ENCODE measurements at regions of chr22 and their contacts with region 1.

Region 1: GRCh38 chr22:37849089-37849751 is at the start of gene EIF3L:
- DNase-seq: peak; percentile 79 to 90 (median 84)
- ATAC-seq: peak; percentile 79
- H3K4me3 ChIP-seq: peak within 1 kb of the TSS; percentile 77
- H3K4me3 Mint-ChIP-seq: peak within 1 kb of the TSS; percentile 91 to 99 (median 95)
- H3K27ac ChIP-seq: peak within 1 kb of the TSS; percentile 79
- H3K27ac Mint-ChIP-seq: peak within 1 kb of the TSS; percentile 89 to 100 (median 98)
- H3K4me1 ChIP-seq: peaks cover 21 to 26% of the 10 kb centered on the region in 2 donors
- H3K4me1 Mint-ChIP-seq: peaks cover 26 to 60% (median 50%) of the 10 kb centered on the region in 7 donors
- H3K27me3 ChIP-seq: no peaks in the 10 kb centered on the region
- H3K27me3 Mint-ChIP-seq: no peaks in the 10 kb centered on the region
- total RNA-seq, gene EIF3L: 383 to 586 (median 525) TPM

Region 2: GRCh38 chr22:37229805-37230672 is 619.2 kb before region 1 on chr22:
- CTCF ChIA-PET with region 1: no interaction called
- POLR2A ChIA-PET with region 1: no interaction called
- intact Hi-C with region 1: loop called in 1 of 2 experiments (anchors 1 kb)
- DNase-seq: peak; percentile 60 to 93 (median 89)
- ATAC-seq: peak; percentile 93
- H3K4me3 ChIP-seq: peak overlapping the region; percentile 54
- H3K4me3 Mint-ChIP-seq: peak overlapping the region; percentile 75 to 99 (median 86)
- H3K27ac ChIP-seq: peak overlapping the region; percentile 90
- H3K27ac Mint-ChIP-seq: peak overlapping the region; percentile 96 to 100 (median 99)
- H3K4me1 ChIP-seq: peaks cover 80 to 92% of the 10 kb centered on the region in 2 donors
- H3K4me1 Mint-ChIP-seq: peaks cover 75 to 92% (median 87%) of the 10 kb centered on the region in 7 donors
- H3K27me3 ChIP-seq: no peaks in the 10 kb centered on the region
- H3K27me3 Mint-ChIP-seq: no peaks in the 10 kb centered on the region

Region 3: DNA sequence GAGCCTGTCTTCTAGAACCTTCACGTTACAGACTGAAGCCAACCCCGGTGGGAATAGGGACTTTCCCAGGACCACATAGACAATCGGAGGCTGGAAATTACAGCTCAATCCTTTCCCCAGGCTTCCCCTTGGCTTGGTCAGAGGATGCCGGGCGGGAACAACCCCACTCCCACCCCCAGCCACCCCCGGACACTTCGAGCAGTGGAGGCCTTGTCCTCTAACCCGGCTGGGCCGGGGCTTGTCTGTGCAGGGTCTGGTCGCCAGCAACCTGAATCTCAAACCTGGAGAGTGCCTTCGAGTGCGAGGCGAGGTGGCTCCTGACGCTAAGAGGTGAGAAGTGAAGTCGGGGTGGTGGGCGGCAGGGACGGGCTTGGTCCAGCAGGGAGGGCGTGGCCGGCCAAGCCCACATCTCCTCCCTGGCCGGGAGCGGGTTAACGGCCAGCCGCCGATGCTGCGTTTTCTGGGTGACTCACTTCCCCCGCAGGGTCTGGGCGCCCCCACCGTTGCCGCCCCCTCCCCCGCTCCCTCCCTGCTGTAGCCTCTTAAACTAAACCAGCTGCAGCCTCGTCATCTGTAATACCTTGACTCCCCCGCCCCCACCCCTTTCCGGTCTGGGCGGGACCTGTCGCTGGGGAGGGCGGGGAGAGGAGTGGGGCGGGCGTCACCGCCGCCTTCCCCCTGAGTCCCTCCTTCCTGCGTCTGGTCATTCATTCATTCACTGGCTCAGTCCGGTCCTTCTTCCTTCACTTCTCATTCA is 172.3 kb before region 1 on chr22:
- CTCF ChIA-PET with region 1: no interaction called
- POLR2A ChIA-PET with region 1: no interaction called
- intact Hi-C with region 1: loop called in 1 of 2 experiments (anchors 5 kb)
- DNase-seq: peak; percentile 82 to 95 (median 94)
- ATAC-seq: peak; percentile 93
- H3K4me3 ChIP-seq: peak overlapping the region; percentile 60
- H3K4me3 Mint-ChIP-seq: peak overlapping the region; percentile 82 to 99 (median 91)
- H3K27ac ChIP-seq: peak overlapping the region; percentile 99
- H3K27ac Mint-ChIP-seq: peak overlapping the region; percentile 94 to 100 (median 100)
- H3K4me1 ChIP-seq: peaks cover 29 to 37% of the 10 kb centered on the region in 2 donors
- H3K4me1 Mint-ChIP-seq: peaks cover 14 to 68% (median 60%) of the 10 kb centered on the region in 7 donors
- H3K27me3 ChIP-seq: no peaks in the 10 kb centered on the region
- H3K27me3 Mint-ChIP-seq: no peaks in the 10 kb centered on the region

Region 4: GRCh38 chr22:37734964-37735451 is 114.2 kb before region 1 on chr22:
- CTCF ChIA-PET with region 1: no interaction called
- POLR2A ChIA-PET with region 1: no interaction called
- intact Hi-C with region 1: no loop called
- DNase-seq: no peak
- ATAC-seq: no peak
- H3K4me3 ChIP-seq: no peak overlapping the region
- H3K4me3 Mint-ChIP-seq: no peak overlapping the region
- H3K27ac ChIP-seq: no peak overlapping the region
- H3K27ac Mint-ChIP-seq: no peak overlapping the region
- H3K4me1 ChIP-seq: no peaks in the 10 kb centered on the region
- H3K4me1 Mint-ChIP-seq: peaks cover 0 to 6% (median 0%) of the 10 kb centered on the region in 7 donors
- H3K27me3 ChIP-seq: no peaks in the 10 kb centered on the region
- H3K27me3 Mint-ChIP-seq: no peaks in the 10 kb centered on the region

Region 5: DNA sequence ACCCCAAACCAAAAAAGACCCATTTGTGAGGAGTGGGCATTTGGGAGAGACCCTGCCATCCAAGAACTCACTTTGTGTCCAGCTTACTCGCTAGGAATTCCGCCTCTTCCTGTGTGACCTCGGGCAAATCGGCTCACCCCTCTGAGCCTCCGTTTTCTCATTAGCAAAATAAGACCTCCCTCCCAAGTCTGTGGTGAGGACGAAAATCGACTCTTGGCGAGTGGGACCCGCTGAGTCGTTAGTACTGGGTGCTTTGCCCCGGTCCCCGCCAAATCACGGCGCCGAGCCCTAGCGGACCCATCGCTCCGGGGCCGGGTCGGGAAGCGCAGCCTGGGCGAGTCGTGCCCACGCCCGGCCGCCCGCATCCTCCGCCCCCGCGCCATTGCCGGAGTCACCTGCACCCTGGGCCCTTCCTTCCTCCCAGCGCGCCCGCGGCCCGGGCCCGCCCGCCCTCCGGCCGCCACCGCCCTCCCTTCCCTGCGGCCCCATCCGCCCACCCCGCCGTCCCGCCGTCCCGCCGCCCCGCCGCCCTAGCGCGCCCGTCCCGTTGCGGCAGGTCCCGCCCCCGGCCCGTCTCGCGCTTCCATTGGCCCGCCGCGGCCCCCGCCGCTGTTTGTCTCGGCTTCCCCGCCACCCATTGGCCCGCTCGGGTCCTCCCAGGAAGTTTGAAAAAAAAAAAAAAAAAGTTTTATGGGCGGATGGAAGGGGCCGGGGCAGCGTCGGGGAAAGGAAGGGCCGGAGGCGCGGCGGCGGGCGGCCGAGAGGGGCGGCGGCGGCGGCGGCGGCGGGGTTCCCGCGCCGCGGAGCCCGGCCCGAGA is 103.5 kb before region 1 on chr22:
- CTCF ChIA-PET with region 1: no interaction called
- POLR2A ChIA-PET with region 1: no interaction called
- intact Hi-C with region 1: loop called in 1 of 2 experiments (anchors 1 kb)
- DNase-seq: peak; percentile 67 to 90 (median 78)
- ATAC-seq: peak; percentile 97
- H3K4me3 ChIP-seq: peak overlapping the region; percentile 74
- H3K4me3 Mint-ChIP-seq: peak overlapping the region; percentile 82 to 96 (median 92)
- H3K27ac ChIP-seq: peak overlapping the region; percentile 77
- H3K27ac Mint-ChIP-seq: peak overlapping the region; percentile 75 to 93 (median 87)
- H3K4me1 ChIP-seq: peaks cover 9 to 18% of the 10 kb centered on the region in 2 donors
- H3K4me1 Mint-ChIP-seq: peaks cover 13 to 36% (median 26%) of the 10 kb centered on the region in 7 donors
- H3K27me3 ChIP-seq: no peaks in the 10 kb centered on the region
- H3K27me3 Mint-ChIP-seq: no peaks in the 10 kb centered on the region

Region 6: GRCh38 chr22:37817705-37818408 is 31.4 kb before region 1 on chr22:
- CTCF ChIA-PET with region 1: interaction called, 3 read pairs
- POLR2A ChIA-PET with region 1: interaction called, 4 read pairs
- intact Hi-C with region 1: loop called in 1 of 2 experiments (anchors 1 kb)
- DNase-seq: peak; percentile 44 to 92 (median 72)
- ATAC-seq: peak; percentile 92
- H3K4me3 ChIP-seq: peak overlapping the region; percentile 61
- H3K4me3 Mint-ChIP-seq: peak overlapping the region in 9 of 10 donors; percentile 34 to 74 (median 52)
- H3K27ac ChIP-seq: no peak overlapping the region
- H3K27ac Mint-ChIP-seq: no peak overlapping the region
- H3K4me1 ChIP-seq: peaks cover 10% of the 10 kb centered on the region in 2 donors
- H3K4me1 Mint-ChIP-seq: peaks cover 0 to 16% (median 11%) of the 10 kb centered on the region in 7 donors
- H3K27me3 ChIP-seq: no peaks in the 10 kb centered on the region
- H3K27me3 Mint-ChIP-seq: peaks cover 9 to 33% (median 20%) of the 10 kb centered on the region in 5 donors

Region 7: GRCh38 chr22:37905534-37906363 is 56.5 kb after region 1 on chr22 and contains the start of gene MICALL1:
- CTCF ChIA-PET with region 1: interaction called, 3 read pairs
- POLR2A ChIA-PET with region 1: interaction called, 4 read pairs
- intact Hi-C with region 1: loop called in 1 of 2 experiments (anchors 1 kb)
- DNase-seq: peak; percentile 39 to 82 (median 57)
- ATAC-seq: peak; percentile 90
- H3K4me3 ChIP-seq: peak within 1 kb of the TSS; percentile 47
- H3K4me3 Mint-ChIP-seq: peak within 1 kb of the TSS; percentile 69 to 92 (median 86)
- H3K27ac ChIP-seq: peak within 1 kb of the TSS; percentile 72
- H3K27ac Mint-ChIP-seq: peak within 1 kb of the TSS; percentile 79 to 90 (median 86)
- H3K4me1 ChIP-seq: peaks cover 0 to 9% of the 10 kb centered on the region in 2 donors
- H3K4me1 Mint-ChIP-seq: peaks cover 21 to 34% (median 26%) of the 10 kb centered on the region in 7 donors
- H3K27me3 ChIP-seq: no peaks in the 10 kb centered on the region
- H3K27me3 Mint-ChIP-seq: no peaks in the 10 kb centered on the region
- total RNA-seq, gene MICALL1: 22.2 to 40.0 (median 27.8) TPM

Region 8: GRCh38 chr22:38181453-38182247 is 332.4 kb after region 1 on chr22 and contains the start of gene PLA2G6:
- CTCF ChIA-PET with region 1: no interaction called
- POLR2A ChIA-PET with region 1: no interaction called
- intact Hi-C with region 1: loop called (anchors 5 kb)
- DNase-seq: peak; percentile 86 to 99 (median 90)
- ATAC-seq: peak; percentile 96
- H3K4me3 ChIP-seq: peak within 1 kb of the TSS; percentile 90
- H3K4me3 Mint-ChIP-seq: peak within 1 kb of the TSS; percentile 88 to 100 (median 94)
- H3K27ac ChIP-seq: peak within 1 kb of the TSS; percentile 67
- H3K27ac Mint-ChIP-seq: peak within 1 kb of the TSS; percentile 36 to 94 (median 89)
- H3K4me1 ChIP-seq: peaks cover 16 to 30% of the 10 kb centered on the region in 2 donors
- H3K4me1 Mint-ChIP-seq: peaks cover 34 to 50% (median 42%) of the 10 kb centered on the region in 7 donors
- H3K27me3 ChIP-seq: no peaks in the 10 kb centered on the region
- H3K27me3 Mint-ChIP-seq: peaks cover 0 to 14% (median 0%) of the 10 kb centered on the region in 5 donors
- total RNA-seq, gene PLA2G6: 66.5 to 252 (median 105) TPM

Measured in naive thymus-derived CD4-positive, alpha-beta T cell (primary cell).